Activated naive CD4-positive, alpha-beta T cell treated with anti-CD3 and anti-CD28 coated beads for 36 hours (primary cell): ENCODE measurements at regions of chr1 and their contacts with region 1.

Region 1: GRCh38 chr1:19596714-19597495 is 47.2 kb upstream of the NBL1 start:
- DNase-seq: peak; percentile 99
- H3K4me3 Mint-ChIP-seq: peak overlapping the region; percentile 94
- H3K27ac Mint-ChIP-seq: peak overlapping the region; percentile 97
- H3K4me1 Mint-ChIP-seq: peaks cover 39% of the 10 kb centered on the region
- H3K27me3 Mint-ChIP-seq: no peaks in the 10 kb centered on the region

Region 2: GRCh38 chr1:19209990-19210771 is 386.7 kb before region 1 on chr1 and contains the start of gene UBR4:
- CTCF ChIA-PET with region 1: no interaction called
- intact Hi-C with region 1: loop called (anchors 1 kb)
- DNase-seq: peak; percentile 97
- H3K4me3 Mint-ChIP-seq: peak within 1 kb of the TSS; percentile 90
- H3K27ac Mint-ChIP-seq: peak within 1 kb of the TSS; percentile 95
- H3K4me1 Mint-ChIP-seq: peaks cover 69% of the 10 kb centered on the region
- H3K27me3 Mint-ChIP-seq: no peaks in the 10 kb centered on the region
- total RNA-seq, gene UBR4: 165 to 169 TPM

Region 3: GRCh38 chr1:19311959-19312781 is 284.7 kb before region 1 on chr1 and contains the starts of genes AKR7A2 and SLC66A1:
- CTCF ChIA-PET with region 1: no interaction called
- intact Hi-C with region 1: loop called (anchors 1 kb)
- DNase-seq: peak; percentile 86
- H3K4me3 Mint-ChIP-seq: peak within 1 kb of the TSS; percentile 83
- H3K27ac Mint-ChIP-seq: no peak within 1 kb of the TSS
- H3K4me1 Mint-ChIP-seq: peaks cover 25% of the 10 kb centered on the region
- H3K27me3 Mint-ChIP-seq: no peaks in the 10 kb centered on the region
- total RNA-seq, gene AKR7A2: 36.6 to 38.8 TPM
- total RNA-seq, gene SLC66A1: 2.6 to 2.7 TPM

Region 4: GRCh38 chr1:19462781-19463503 is 134.0 kb before region 1 on chr1:
- CTCF ChIA-PET with region 1: interaction called, 3 read pairs
- intact Hi-C with region 1: loop called (anchors 1 kb)
- DNase-seq: peak; percentile 59
- H3K4me3 Mint-ChIP-seq: no peak overlapping the region
- H3K27ac Mint-ChIP-seq: peak overlapping the region; percentile 66
- H3K4me1 Mint-ChIP-seq: peaks cover 88% of the 10 kb centered on the region
- H3K27me3 Mint-ChIP-seq: no peaks in the 10 kb centered on the region

Region 5: GRCh38 chr1:19606817-19607642 is 10.1 kb after region 1 on chr1:
- CTCF ChIA-PET with region 1: interaction called, 4 read pairs
- intact Hi-C with region 1: loop called (anchors 1 kb)
- DNase-seq: peak; percentile 72
- H3K4me3 Mint-ChIP-seq: no peak overlapping the region
- H3K27ac Mint-ChIP-seq: peak overlapping the region; percentile 74
- H3K4me1 Mint-ChIP-seq: peaks cover 62% of the 10 kb centered on the region
- H3K27me3 Mint-ChIP-seq: no peaks in the 10 kb centered on the region

Region 6: GRCh38 chr1:19651141-19651737 is 54.3 kb after region 1 on chr1:
- CTCF ChIA-PET with region 1: no interaction called
- intact Hi-C with region 1: loop called (anchors 2 kb)
- DNase-seq: peak; percentile 74
- H3K4me3 Mint-ChIP-seq: no peak overlapping the region
- H3K27ac Mint-ChIP-seq: no peak overlapping the region
- H3K4me1 Mint-ChIP-seq: peaks cover 33% of the 10 kb centered on the region
- H3K27me3 Mint-ChIP-seq: no peaks in the 10 kb centered on the region

Region 7: DNA sequence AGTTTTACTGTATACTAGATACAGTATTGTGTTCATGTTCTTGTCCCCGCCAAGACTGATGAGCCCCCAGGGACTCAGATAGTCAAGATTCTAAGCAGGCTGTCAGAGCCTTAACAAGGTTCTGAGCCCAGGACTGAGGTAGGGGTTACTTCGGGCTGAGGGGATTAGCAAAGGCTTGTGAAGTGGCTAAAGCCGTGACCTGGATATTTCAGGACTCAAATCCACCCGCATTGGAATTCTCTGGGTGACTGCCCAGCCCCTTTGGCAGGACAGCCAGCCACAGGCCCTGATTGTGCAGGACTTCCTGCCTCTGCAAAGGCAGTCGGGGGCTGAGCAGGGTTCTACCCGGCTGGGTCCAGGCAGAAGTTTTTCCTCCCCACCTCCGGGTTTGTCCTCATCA is 473.0 kb after region 1 on chr1 and contains the start of gene PLA2G5:
- CTCF ChIA-PET with region 1: no interaction called
- intact Hi-C with region 1: no loop called
- DNase-seq: no peak
- H3K4me3 Mint-ChIP-seq: no peak within 1 kb of the TSS
- H3K27ac Mint-ChIP-seq: no peak within 1 kb of the TSS
- H3K4me1 Mint-ChIP-seq: no peaks in the 10 kb centered on the region
- H3K27me3 Mint-ChIP-seq: no peaks in the 10 kb centered on the region
- total RNA-seq, gene PLA2G5: not detected